Activated CD4-positive, alpha-beta memory T cell treated with anti-CD3 and anti-CD28 coated beads for 36 hours (primary cell): ENCODE measurements at regions of chr6 and their contacts with region 1.

Region 1: GRCh38 chr6:108921547-108922361 is 73.5 kb downstream of the ARMC2 start:
- DNase-seq: peak; percentile 68
- H3K4me3 Mint-ChIP-seq: peak overlapping the region; percentile 33
- H3K27ac Mint-ChIP-seq: peak overlapping the region; percentile 81
- H3K4me1 Mint-ChIP-seq: peaks cover 31% of the 10 kb centered on the region
- H3K27me3 Mint-ChIP-seq: peaks cover 4% of the 10 kb centered on the region

Region 2: GRCh38 chr6:108667993-108668392 is 253.8 kb before region 1 on chr6:
- CTCF ChIA-PET with region 1: no interaction called
- POLR2A ChIA-PET with region 1: no interaction called
- intact Hi-C with region 1: loop called (anchors 5 kb)
- DNase-seq: no peak
- H3K4me3 Mint-ChIP-seq: no peak overlapping the region
- H3K27ac Mint-ChIP-seq: no peak overlapping the region
- H3K4me1 Mint-ChIP-seq: peaks cover 56% of the 10 kb centered on the region
- H3K27me3 Mint-ChIP-seq: no peaks in the 10 kb centered on the region

Region 3: DNA sequence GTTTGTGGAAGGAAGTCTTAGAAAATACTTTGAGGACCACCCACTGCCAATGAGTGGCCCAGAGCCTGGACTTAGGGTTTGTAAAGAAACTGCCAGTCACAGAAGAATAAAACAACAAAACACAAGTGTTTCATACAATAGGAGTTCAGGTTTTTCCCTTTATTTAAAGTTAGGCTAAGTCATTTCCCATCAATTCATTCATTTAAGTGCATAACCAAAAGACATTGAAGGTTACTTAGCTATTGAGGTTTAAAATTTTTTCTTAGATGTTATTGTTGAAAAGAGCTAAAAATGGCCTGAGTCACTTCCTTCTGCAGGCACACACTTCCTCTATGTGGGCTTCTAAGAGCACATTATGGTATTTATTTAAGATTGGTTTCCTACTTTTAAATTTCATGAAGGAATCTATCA is 19.4 kb before region 1 on chr6:
- CTCF ChIA-PET with region 1: no interaction called
- POLR2A ChIA-PET with region 1: interaction called, 4 read pairs
- intact Hi-C with region 1: loop called (anchors 2 kb)
- DNase-seq: no peak
- H3K4me3 Mint-ChIP-seq: no peak overlapping the region
- H3K27ac Mint-ChIP-seq: peak overlapping the region; percentile 62
- H3K4me1 Mint-ChIP-seq: peaks cover 27% of the 10 kb centered on the region
- H3K27me3 Mint-ChIP-seq: no peaks in the 10 kb centered on the region

Region 4: GRCh38 chr6:108947114-108947854 is 25.5 kb after region 1 on chr6:
- CTCF ChIA-PET with region 1: interaction called, 4 read pairs
- POLR2A ChIA-PET with region 1: interaction called, 4 read pairs
- intact Hi-C with region 1: loop called (anchors 2 kb)
- DNase-seq: no peak
- H3K4me3 Mint-ChIP-seq: no peak overlapping the region
- H3K27ac Mint-ChIP-seq: no peak overlapping the region
- H3K4me1 Mint-ChIP-seq: peaks cover 34% of the 10 kb centered on the region
- H3K27me3 Mint-ChIP-seq: no peaks in the 10 kb centered on the region

Region 5: GRCh38 chr6:109009236-109009961 is 87.6 kb after region 1 on chr6:
- CTCF ChIA-PET with region 1: interaction called, 3 read pairs
- POLR2A ChIA-PET with region 1: interaction called, 13 read pairs
- intact Hi-C with region 1: loop called (anchors 1 kb)
- DNase-seq: peak; percentile 93
- H3K4me3 Mint-ChIP-seq: peak overlapping the region; percentile 94
- H3K27ac Mint-ChIP-seq: peak overlapping the region; percentile 92
- H3K4me1 Mint-ChIP-seq: peaks cover 60% of the 10 kb centered on the region
- H3K27me3 Mint-ChIP-seq: no peaks in the 10 kb centered on the region